Left cardiac atrium (tissue), 4 donors: ENCODE measurements at regions of chrX and their contacts with region 1.

Region 1: GRCh38 chrX:109485470-109486340 is 3.8 kb upstream of the GUCY2F start:
- DNase-seq: peak; percentile 58
- ATAC-seq: no peak

Region 2: DNA sequence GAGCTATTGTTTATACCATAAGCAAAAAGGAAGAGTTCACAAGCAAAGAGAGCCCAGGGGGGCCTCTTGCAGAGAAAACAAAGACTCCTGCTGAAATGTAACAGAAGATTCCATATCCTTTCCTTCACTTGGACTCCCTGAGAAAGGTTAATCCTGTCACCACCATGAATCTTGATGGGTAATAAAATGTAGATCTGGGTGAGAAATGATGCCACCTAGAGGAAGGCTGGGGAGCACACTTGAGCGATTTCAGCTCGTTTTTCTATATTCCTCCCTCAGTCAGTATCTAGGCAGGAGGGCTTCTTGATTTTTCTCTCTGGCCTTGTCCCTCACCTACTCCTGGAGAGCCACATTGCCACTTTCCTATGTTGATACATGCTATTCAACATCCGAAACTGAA is 149.5 kb after region 1 on chrX:
- intact Hi-C with region 1: loop called (anchors 2 to 10 kb)
- DNase-seq: no peak
- ATAC-seq: no peak

Region 3: DNA sequence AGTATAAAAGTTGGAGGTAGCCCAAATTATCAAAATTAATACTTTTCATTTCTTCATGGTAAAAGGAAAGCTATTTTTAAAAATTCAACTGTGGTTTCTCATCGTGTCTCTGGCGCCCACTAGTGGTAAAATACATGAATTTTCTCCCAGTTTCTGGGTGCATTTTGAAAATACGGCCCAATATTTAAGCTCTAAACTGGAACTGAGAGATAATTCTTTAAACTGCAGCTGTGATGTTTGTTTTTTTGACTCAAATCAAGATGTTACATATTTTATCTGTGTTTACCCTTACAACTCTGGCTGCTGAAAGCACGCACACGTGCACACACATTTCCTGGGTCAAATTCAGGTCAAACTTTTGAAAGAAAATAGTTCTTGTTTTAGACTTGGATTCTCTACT is 371.3 kb after region 1 on chrX:
- intact Hi-C with region 1: loop called in 1 of 2 experiments (anchors 10 kb)
- DNase-seq: no peak
- ATAC-seq: no peak

Region 4: GRCh38 chrX:109886122-109886761 is 400.5 kb after region 1 on chrX:
- intact Hi-C with region 1: loop called (anchors 10 kb)
- DNase-seq: peak; percentile 33
- ATAC-seq: no peak